ENCODE measurements at regions of chr1 and their contacts with region 1.

Region 1: GRCh38 chr1:56831871-56832693 is 12.9 kb upstream of the FYB2 start:
- DNase-seq: peak; percentile 47
- H3K4me3 Mint-ChIP-seq: no peak overlapping the region
- H3K27ac Mint-ChIP-seq: no peak overlapping the region
- H3K4me1 Mint-ChIP-seq: no peaks in the 10 kb centered on the region
- H3K27me3 Mint-ChIP-seq: peaks cover 1% of the 10 kb centered on the region

Region 2: GRCh38 chr1:56617141-56617540 is 214.9 kb before region 1 on chr1:
- intact Hi-C with region 1: no loop called
- DNase-seq: no peak
- H3K4me3 Mint-ChIP-seq: no peak overlapping the region
- H3K27ac Mint-ChIP-seq: no peak overlapping the region
- H3K4me1 Mint-ChIP-seq: no peaks in the 10 kb centered on the region
- H3K27me3 Mint-ChIP-seq: no peaks in the 10 kb centered on the region

Region 3: GRCh38 chr1:56967900-56968832 is 136.1 kb after region 1 on chr1:
- intact Hi-C with region 1: loop called (anchors 2 kb)
- DNase-seq: no peak
- H3K4me3 Mint-ChIP-seq: no peak overlapping the region
- H3K27ac Mint-ChIP-seq: no peak overlapping the region
- H3K4me1 Mint-ChIP-seq: no peaks in the 10 kb centered on the region
- H3K27me3 Mint-ChIP-seq: no peaks in the 10 kb centered on the region

Region 4: GRCh38 chr1:57222801-57223200 is 390.7 kb after region 1 on chr1:
- intact Hi-C with region 1: loop called (anchors 10 kb)
- DNase-seq: no peak
- H3K4me3 Mint-ChIP-seq: no peak overlapping the region
- H3K27ac Mint-ChIP-seq: no peak overlapping the region
- H3K4me1 Mint-ChIP-seq: no peaks in the 10 kb centered on the region
- H3K27me3 Mint-ChIP-seq: no peaks in the 10 kb centered on the region

Measured in activated T-helper 1 cell treated with anti-CD3 and anti-CD28 coated beads, Interleukin-12 subunit alpha, Interleukin-12 subunit beta, Interleukin-2, Interleukin-4 antibody, amounts not matched to agents 30 ng/mL and 10 ng/mL and 1 ng/mL, durations not matched to agents 14 hours and 24 hours and 36 hours (primary cell).